Endothelial cell of umbilical vein (primary cell): ENCODE measurements at regions of chr1 and their contacts with region 1.

Region 1: GRCh38 chr1:245156081-245156735 is 1.4 kb downstream of the KIF26B start:
- DNase-seq: peak; percentile 60
- H3K4me3 ChIP-seq: peak overlapping the region; percentile 10 to 51 (median 45)
- H3K27ac ChIP-seq: no peak overlapping the region
- H3K4me1 ChIP-seq: peaks cover 28% of the 10 kb centered on the region
- H3K27me3 ChIP-seq: peaks cover 24 to 56% of the 10 kb centered on the region in 2 experiments
- CTCF ChIP-seq: peak; percentile 65 to 75
- POLR2A ChIP-seq: no peak

Region 2: DNA sequence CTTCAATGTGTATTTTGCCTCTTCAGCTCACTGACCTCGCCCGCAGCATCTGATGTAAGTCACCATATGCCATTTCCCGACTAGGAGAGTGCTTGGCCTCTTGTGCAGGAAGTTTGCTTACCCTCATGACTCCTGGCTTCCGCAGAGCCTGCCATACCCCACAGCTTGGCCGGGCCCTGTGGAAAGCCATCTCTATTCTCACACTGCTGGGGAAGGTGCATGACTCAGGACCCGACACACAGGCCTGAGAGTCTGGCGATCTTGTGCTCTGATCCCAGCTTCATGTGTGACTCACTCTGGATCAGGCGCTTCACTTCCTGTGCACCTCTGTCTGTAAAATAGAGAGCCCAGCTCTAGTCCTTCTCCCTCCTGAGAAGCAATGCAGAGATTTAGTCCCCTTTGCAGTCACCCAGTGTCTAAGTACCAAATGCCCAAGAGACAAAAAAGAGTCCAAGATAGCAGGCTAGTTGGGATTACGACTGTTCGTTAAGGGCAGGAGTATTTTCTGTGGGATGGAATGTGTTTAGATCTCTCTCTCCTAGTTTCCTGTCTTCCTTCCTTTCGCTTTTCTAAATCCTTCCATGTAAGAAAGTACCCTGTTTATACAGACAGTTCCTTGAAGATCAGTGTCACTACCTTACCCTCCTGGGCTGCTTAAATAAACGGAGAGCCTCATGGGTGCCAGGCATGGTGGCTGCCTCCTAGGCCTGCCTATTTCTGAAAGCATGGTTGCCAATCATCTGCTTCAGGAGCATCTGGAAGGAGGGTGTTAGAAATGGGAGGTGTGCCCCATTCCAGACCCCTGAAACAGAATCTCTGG is 64.2 kb before region 1 on chr1:
- CTCF ChIA-PET with region 1: interaction called, 15 read pairs
- POLR2A ChIA-PET with region 1: interaction called, 6 read pairs
- dilution Hi-C with region 1: no loop called
- intact Hi-C with region 1: loop called (anchors 1 kb)
- DNase-seq: peak; percentile 99
- H3K4me3 ChIP-seq: no peak overlapping the region
- H3K27ac ChIP-seq: peak overlapping the region; percentile 96
- H3K4me1 ChIP-seq: peaks cover 23% of the 10 kb centered on the region
- H3K27me3 ChIP-seq: no peaks in the 10 kb centered on the region
- CTCF ChIP-seq: no peak
- POLR2A ChIP-seq: peak; percentile 63

Region 3: DNA sequence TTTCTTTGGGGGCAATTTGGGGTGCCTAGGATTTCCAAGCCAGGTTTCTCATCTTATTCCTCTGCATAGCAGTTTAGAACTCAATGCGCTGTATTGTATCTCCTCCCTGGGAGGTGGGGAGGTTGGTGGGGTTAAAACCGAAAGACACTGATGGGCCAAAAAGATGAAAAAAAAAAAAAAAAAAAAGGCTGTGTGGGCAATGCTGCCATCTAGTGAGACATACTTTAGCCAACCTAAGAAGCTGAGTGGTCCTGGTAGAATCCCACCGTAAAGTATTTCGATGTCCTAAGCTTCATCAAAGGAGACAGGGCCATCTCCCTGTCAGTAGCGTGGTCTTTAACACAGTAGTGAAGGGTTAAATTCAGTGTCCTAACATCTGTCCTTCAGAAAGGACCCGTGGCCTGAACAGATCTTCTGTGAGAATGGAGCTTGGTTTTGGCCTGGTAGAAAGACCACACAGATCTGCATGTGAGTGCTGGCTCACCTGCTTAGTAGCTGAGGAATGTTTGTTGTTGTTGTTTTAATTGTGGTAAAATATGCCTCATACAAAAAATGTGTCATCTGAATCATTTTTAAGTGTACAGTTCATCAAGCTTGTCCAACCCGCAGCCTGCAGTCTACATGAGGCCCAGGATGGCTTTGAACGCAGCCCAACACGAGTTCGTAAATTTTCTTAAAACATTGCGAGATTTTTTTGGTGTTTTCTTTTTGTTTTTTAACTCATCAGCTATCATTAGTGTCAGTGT is 224.8 kb after region 1 on chr1:
- CTCF ChIA-PET with region 1: interaction called, 16 read pairs
- POLR2A ChIA-PET with region 1: no interaction called
- dilution Hi-C with region 1: no loop called
- intact Hi-C with region 1: loop called (anchors 2 kb)
- DNase-seq: no peak
- H3K4me3 ChIP-seq: no peak overlapping the region
- H3K27ac ChIP-seq: no peak overlapping the region
- H3K4me1 ChIP-seq: no peaks in the 10 kb centered on the region
- H3K27me3 ChIP-seq: no peaks in the 10 kb centered on the region
- CTCF ChIP-seq: peak in 1 of 2 donors; percentile 26
- POLR2A ChIP-seq: no peak

Region 4: GRCh38 chr1:246002725-246003441 is 846.7 kb after region 1 on chr1:
- CTCF ChIA-PET with region 1: interaction called, 128 read pairs
- POLR2A ChIA-PET with region 1: no interaction called
- dilution Hi-C with region 1: no loop called
- intact Hi-C with region 1: loop called (anchors 1 kb)
- DNase-seq: peak; percentile 83
- H3K4me3 ChIP-seq: no peak overlapping the region
- H3K27ac ChIP-seq: no peak overlapping the region
- H3K4me1 ChIP-seq: no peaks in the 10 kb centered on the region
- H3K27me3 ChIP-seq: no peaks in the 10 kb centered on the region
- CTCF ChIP-seq: peak; percentile 70 to 77
- POLR2A ChIP-seq: no peak

Region 5: GRCh38 chr1:246280551-246280950 is 1124.3 kb after region 1 on chr1:
- CTCF ChIA-PET with region 1: interaction called, 50 read pairs
- POLR2A ChIA-PET with region 1: no interaction called
- dilution Hi-C with region 1: no loop called
- intact Hi-C with region 1: loop called (anchors 1 kb)
- DNase-seq: peak; percentile 36
- H3K4me3 ChIP-seq: no peak overlapping the region
- H3K27ac ChIP-seq: no peak overlapping the region
- H3K4me1 ChIP-seq: no peaks in the 10 kb centered on the region
- H3K27me3 ChIP-seq: no peaks in the 10 kb centered on the region
- CTCF ChIP-seq: no peak
- POLR2A ChIP-seq: no peak

Region 6: DNA sequence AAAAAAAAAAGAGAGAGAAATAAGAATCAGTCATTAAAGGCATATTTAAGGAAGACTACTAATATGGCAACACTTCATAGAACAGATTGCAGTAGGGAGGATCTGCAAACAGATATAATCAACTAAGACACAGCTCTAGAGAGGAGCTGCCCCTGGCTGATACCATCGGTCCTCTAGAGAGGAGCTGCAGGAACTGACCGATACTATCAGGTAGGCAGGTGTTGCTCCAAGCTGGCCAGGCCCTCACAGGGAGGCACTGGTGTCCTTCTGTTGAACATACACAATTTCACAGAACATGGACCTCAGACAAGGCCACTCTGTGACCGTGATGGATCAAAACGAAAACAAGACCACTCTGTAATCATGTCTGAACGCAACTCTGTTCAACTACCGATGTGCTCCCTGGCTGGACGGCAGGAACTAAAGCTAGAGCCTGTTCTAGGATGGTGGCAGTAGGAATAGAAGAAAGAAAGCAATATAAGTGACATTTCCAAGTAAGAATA is 1335.4 kb after region 1 on chr1:
- CTCF ChIA-PET with region 1: interaction called, 19 read pairs
- POLR2A ChIA-PET with region 1: no interaction called
- dilution Hi-C with region 1: no loop called
- intact Hi-C with region 1: loop called (anchors 1 kb)
- DNase-seq: no peak
- H3K4me3 ChIP-seq: no peak overlapping the region
- H3K27ac ChIP-seq: no peak overlapping the region
- H3K4me1 ChIP-seq: no peaks in the 10 kb centered on the region
- H3K27me3 ChIP-seq: no peaks in the 10 kb centered on the region
- CTCF ChIP-seq: no peak
- POLR2A ChIP-seq: no peak